Dendritic cell treated with granulocyte-macrophage colony-stimulating factor and Interleukin-4, amounts not matched to agents 40 ng/mL and 50 ng/mL, for 4 days (primary cell): ENCODE measurements at regions of chr9 and their contacts with region 1.

Region 1: GRCh38 chr9:120842690-120843499 is at the start of gene PSMD5:
- H3K4me3 Mint-ChIP-seq: peak within 1 kb of the TSS; percentile 97
- H3K27ac Mint-ChIP-seq: peak within 1 kb of the TSS; percentile 100
- H3K4me1 Mint-ChIP-seq: peaks cover 53% of the 10 kb centered on the region
- H3K27me3 Mint-ChIP-seq: no peaks in the 10 kb centered on the region

Region 2: GRCh38 chr9:120032639-120033038 is 810.3 kb before region 1 on chr9:
- intact Hi-C with region 1: no loop called
- H3K4me3 Mint-ChIP-seq: no peak overlapping the region
- H3K27ac Mint-ChIP-seq: no peak overlapping the region
- H3K4me1 Mint-ChIP-seq: no peaks in the 10 kb centered on the region
- H3K27me3 Mint-ChIP-seq: no peaks in the 10 kb centered on the region

Region 3: DNA sequence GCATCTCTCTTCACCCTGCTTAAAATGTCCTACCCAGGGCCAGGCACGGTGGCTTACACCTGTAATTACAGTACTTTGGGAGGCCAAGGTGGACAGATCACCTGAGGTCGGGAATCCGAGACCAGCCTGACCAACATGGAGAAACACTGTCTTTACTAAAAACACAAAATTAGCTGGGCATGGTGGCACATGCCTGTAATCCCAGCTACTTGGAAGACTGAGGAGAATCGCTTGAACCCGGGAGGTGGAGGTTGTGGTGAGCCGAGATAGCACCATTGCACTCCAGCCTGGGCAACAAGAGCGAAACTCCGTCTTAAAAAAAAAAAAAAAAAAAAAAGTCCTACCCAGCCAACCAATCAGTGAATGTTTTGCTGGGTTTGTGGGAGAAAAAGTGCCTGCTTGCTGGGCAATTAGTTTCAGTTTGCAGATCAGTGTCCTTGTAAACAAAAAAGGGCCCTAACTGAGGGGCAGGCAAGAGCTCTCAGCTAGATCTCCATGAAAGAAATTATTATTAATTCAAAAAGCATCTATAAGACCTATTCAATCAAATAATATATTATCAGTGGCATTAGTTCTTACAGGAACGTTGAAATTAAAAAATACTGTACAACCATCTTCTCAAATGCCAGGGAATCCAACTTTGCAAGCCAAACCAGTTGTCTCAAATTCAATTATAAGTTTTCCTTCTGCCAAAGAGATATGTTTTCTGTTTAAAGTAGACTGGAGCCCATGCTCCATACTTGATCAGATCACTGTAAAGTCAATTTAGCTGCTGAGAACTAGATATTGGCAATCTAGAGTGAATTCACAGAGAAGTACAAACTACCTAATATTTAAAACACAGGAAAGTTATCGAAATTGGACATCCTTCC is 132.5 kb before region 1 on chr9:
- intact Hi-C with region 1: no loop called
- H3K4me3 Mint-ChIP-seq: peak overlapping the region; percentile 82
- H3K27ac Mint-ChIP-seq: peak overlapping the region; percentile 98
- H3K4me1 Mint-ChIP-seq: peaks cover 50% of the 10 kb centered on the region
- H3K27me3 Mint-ChIP-seq: no peaks in the 10 kb centered on the region

Region 4: DNA sequence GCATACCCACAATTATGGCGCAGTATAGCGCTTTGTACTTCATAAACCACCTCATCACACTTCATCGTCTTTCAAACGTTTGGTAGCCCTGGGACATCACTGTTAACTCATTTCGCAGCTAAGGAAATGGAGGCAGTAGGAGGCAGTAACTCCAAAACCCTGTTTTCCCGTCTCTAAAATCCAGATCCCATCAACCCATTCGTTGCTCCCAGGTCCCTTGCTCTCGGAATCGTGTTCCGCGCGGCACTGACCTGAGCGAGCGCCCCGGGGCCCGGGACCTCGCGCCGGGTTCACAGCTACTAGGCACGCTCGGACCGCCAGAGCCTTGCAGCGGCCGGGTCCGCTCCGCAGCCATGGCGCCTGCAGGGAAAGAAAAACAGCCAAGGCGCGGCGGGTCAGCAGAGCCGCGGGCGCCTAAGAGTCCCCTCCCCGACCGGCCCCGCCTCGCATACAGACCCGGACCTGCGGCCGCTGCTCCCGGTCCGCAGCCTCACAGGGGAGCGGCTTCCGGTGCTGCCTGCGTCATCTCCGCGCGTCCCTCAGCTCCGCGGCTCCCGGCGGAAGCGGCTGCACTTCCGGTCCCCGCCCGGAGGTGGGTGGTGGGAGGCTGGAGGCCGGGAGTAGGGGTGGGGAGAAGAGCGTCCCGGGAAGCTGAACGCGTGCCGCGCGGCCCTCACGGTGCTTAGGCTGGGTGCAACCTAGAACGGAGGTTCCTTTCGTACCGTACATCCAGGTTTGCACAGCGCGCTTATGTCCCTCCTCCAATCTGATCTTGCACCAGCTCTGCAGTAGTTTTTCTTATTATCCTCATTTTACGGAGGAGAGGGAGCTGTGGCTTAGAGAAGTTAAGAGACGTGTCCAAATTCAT is 49.8 kb before region 1 on chr9 and contains the start of gene FBXW2:
- intact Hi-C with region 1: loop called (anchors 1 kb)
- H3K4me3 Mint-ChIP-seq: peak within 1 kb of the TSS; percentile 97
- H3K27ac Mint-ChIP-seq: peak within 1 kb of the TSS; percentile 94
- H3K4me1 Mint-ChIP-seq: peaks cover 44% of the 10 kb centered on the region
- H3K27me3 Mint-ChIP-seq: no peaks in the 10 kb centered on the region